ENCODE measurements at regions of chr1 and their contacts with region 1.

Region 1: DNA sequence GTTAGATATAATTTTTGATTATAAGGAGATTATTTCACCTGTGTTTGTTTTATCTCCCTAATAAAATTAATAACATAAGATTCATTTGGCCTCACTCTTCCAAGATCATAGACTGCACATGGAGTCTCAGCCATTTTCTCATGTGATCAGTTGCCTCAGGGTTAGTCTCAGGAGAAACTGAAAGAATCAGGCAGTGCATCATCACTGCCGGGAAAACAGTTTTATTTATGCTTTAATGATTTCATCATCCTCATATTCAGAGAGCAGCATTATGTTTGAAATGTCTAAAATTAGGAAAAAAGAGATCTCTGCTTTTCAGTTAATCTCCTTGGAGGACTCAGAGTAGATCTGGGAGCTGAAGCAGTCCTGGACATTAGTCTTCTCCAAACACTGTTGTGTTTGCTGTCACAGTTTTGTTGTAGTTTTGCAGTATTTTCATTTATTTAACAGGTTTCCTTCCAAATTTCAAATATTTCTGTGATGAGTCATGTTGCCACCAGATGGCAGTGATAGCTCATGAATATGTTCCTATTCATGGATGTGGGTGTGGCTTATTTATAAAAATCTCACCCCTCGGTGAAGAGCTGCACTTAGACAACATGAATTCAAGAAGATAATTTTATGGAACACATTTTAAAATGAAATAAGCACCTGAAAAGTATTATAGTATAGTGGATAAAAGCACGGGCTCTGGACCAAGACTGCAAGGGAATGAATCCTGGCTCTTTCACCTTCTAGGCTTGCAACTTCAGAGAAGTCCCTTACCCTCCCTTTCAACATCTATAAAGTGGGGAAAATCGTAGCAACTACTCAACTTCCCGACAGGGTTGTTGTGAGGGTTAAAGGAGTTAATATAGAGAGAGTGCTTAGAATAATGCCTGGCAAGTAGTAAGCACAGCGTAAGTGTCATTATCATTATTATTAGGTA is 31.2 kb downstream of the CHD1L start:
- DNase-seq: peak; percentile 87
- ATAC-seq: peak; percentile 90
- H3K4me3 ChIP-seq: no peak overlapping the region
- H3K27ac ChIP-seq: peak overlapping the region; percentile 51; the same call in 1 of the 2 replicates
- H3K4me1 ChIP-seq: peaks cover 6% of the 10 kb centered on the region
- H3K27me3 ChIP-seq: no peaks in the 10 kb centered on the region
- CTCF ChIP-seq: peak; percentile 59
- POLR2A ChIP-seq: no peak
- RAD21 ChIP-seq: peak; percentile 73

Region 2: DNA sequence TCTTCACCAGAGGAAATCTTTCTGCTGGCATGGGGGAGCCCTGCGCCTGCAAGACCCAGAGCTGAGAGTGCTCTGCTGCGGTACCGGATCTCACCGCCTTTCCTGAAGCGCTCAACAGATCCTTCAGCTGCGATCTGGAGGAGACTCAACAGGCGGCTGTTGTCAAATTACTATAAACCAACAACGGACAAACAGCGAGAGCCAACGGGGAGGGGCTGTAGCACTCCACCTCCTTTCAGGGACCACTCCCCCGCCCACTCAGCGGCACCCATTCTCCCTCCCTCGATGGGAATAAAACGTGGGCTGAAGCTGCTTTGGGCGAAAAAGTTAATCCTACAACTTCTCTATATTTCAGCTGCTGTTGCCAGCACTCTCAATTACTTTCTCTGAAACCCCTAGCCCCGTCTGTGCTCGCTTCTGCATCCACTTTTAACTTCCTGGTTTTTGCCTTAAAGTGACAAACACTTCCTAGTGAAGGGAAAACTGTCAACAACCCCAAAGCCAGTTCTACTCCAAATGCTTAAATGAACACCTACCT is 48.4 kb before region 1 on chr1 and contains the start of gene FMO5:
- CTCF ChIA-PET with region 1: no interaction called
- POLR2A ChIA-PET with region 1: no interaction called
- dilution Hi-C with region 1: no loop called
- in situ Hi-C with region 1: no loop called
- intact Hi-C with region 1: no loop called
- DNase-seq: peak; percentile 57
- ATAC-seq: peak; percentile 95
- H3K4me3 ChIP-seq: peak within 1 kb of the TSS; percentile 92
- H3K27ac ChIP-seq: peak within 1 kb of the TSS; percentile 75; the same call in 1 of the 2 replicates
- H3K4me1 ChIP-seq: peaks cover 2% of the 10 kb centered on the region; the same call in 1 of the 2 replicates
- H3K27me3 ChIP-seq: no peaks in the 10 kb centered on the region; the same call in 1 of the 2 replicates
- CTCF ChIP-seq: 0 out of 2 replicates have a peak, but pooled peaks have one; percentile 6
- POLR2A ChIP-seq: no peak
- RAD21 ChIP-seq: no peak; the same call in 1 of the 2 replicates
- total RNA-seq, gene FMO5: 0.36 and 0.83 TPM in 2 replicates

Region 3: GRCh38 chr1:147389532-147390524 is 116.2 kb after region 1 on chr1:
- CTCF ChIA-PET with region 1: interaction called, 15 read pairs
- POLR2A ChIA-PET with region 1: interaction called, 5 read pairs
- dilution Hi-C with region 1: no loop called
- in situ Hi-C with region 1: loop called (anchors 25 kb)
- intact Hi-C with region 1: loop called (anchors 2 kb)
- DNase-seq: peak; percentile 58
- ATAC-seq: peak; percentile 100
- H3K4me3 ChIP-seq: no peak overlapping the region
- H3K27ac ChIP-seq: no peak overlapping the region
- H3K4me1 ChIP-seq: no peaks in the 10 kb centered on the region
- H3K27me3 ChIP-seq: peaks cover 1% of the 10 kb centered on the region; the same call in 1 of the 2 replicates
- CTCF ChIP-seq: peak; percentile 74
- POLR2A ChIP-seq: no peak
- RAD21 ChIP-seq: peak; percentile 82

Region 4: DNA sequence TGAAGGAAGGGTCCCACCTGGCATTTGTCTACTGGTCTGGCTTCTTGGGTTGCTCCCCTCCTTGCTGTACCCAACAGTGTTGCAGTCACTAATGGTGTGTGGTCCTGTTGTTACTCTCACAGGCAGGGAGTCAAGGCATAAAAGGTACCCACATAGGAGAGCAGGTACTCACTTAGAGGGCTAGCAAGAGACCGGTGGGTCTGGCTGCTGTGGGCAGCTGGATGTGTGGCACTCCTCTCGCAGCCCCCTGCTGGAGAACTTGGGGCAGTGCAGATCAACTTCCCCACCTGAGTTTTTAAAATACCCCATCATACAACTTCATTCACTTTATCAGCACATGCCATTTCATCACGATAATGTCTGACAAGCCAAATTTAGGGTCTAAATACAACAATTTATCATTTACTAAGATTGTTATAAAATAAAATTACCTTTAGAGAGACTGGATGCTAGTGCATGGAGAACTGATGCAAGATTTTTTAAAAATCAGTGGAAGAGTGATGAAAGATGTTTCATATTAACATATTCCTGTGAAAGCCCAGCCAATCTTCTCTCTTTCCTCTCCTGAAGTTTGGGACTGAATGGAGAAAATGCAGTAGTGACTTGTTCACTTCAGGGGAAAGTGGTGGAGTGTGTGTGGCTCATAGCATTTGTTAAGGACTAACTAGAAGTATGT is 353.9 kb after region 1 on chr1:
- CTCF ChIA-PET with region 1: no interaction called
- POLR2A ChIA-PET with region 1: no interaction called
- dilution Hi-C with region 1: no loop called
- in situ Hi-C with region 1: loop called (anchors 10 kb)
- intact Hi-C with region 1: loop called (anchors 5 kb)
- DNase-seq: peak; percentile 44
- ATAC-seq: peak; percentile 93
- H3K4me3 ChIP-seq: no peak overlapping the region
- H3K27ac ChIP-seq: no peak overlapping the region
- H3K4me1 ChIP-seq: no peaks in the 10 kb centered on the region; the same call in 1 of the 2 replicates
- H3K27me3 ChIP-seq: no peaks in the 10 kb centered on the region
- CTCF ChIP-seq: peak; percentile 87
- POLR2A ChIP-seq: no peak
- RAD21 ChIP-seq: peak; percentile 76

Region 5: DNA sequence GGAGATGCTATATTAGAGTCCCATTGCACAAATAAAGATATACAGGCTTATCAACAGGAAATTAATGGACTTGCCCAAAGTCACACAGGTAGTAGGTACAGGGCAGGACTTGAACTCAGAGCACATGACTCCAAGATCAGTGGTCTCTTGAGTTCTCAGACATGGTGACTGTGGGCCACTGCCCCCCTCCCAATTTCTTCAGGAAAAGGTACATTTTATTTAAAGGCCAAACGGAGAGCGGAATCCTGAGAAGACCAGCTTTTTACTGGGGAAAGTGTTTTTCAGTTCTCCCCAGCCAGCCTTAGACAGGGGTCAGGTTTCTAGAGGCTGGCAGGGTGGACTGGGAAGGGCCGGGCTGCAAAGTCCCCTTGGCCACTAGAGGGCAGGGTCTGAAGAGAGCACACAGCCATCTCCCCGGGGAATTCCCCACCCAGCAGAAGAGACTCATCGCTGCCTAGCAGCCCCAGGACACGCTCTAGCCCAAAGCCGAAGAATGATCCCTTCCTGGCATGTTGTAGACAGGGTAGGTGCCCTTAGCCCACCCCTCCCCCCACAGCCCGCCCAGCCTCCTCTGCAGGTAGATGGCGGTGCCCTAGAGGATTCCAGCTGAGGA is 367.0 kb after region 1 on chr1:
- CTCF ChIA-PET with region 1: no interaction called
- POLR2A ChIA-PET with region 1: no interaction called
- dilution Hi-C with region 1: no loop called
- in situ Hi-C with region 1: loop called (anchors 10 kb)
- intact Hi-C with region 1: loop called (anchors 1 kb)
- DNase-seq: peak; percentile 84
- ATAC-seq: peak; percentile 99
- H3K4me3 ChIP-seq: no peak overlapping the region
- H3K27ac ChIP-seq: no peak overlapping the region
- H3K4me1 ChIP-seq: no peaks in the 10 kb centered on the region
- H3K27me3 ChIP-seq: no peaks in the 10 kb centered on the region
- CTCF ChIP-seq: peak; percentile 94
- POLR2A ChIP-seq: no peak
- RAD21 ChIP-seq: peak; percentile 66

Region 6: DNA sequence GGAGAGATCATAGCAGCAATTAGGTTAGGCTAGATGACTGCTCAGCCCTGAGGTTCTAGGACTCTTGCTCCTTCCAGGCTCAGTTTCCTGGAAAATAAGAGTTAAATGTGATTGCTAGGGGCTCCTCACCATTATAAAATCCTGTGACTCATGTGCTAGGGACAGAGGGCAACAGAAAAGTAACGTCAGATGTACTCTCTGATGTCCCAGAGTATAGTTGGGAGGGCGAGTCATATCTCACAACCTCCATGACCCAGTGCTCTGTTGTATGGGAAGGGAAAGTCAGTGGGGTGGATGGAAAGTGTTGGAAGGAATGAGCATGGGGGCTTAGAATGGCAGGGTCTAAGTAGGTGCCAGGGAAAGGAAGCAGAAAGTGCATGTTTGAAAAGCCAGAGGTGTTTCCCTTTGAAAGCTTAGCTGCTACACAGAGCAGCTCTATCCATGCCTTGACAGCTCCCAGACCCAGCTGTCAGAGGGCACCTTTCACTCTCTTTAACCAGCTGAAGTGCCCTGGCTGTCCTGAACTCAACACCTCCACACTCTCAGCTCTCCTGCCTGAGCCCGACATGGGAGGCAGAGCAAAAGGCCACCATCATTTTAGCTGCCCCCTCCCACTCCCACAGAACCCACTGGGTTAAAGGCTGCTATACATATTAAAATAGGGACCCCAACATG is 475.1 kb after region 1 on chr1:
- CTCF ChIA-PET with region 1: no interaction called
- POLR2A ChIA-PET with region 1: no interaction called
- dilution Hi-C with region 1: no loop called
- in situ Hi-C with region 1: no loop called
- intact Hi-C with region 1: no loop called
- DNase-seq: no peak
- ATAC-seq: no peak
- H3K4me3 ChIP-seq: no peak overlapping the region
- H3K27ac ChIP-seq: no peak overlapping the region
- H3K4me1 ChIP-seq: no peaks in the 10 kb centered on the region
- H3K27me3 ChIP-seq: no peaks in the 10 kb centered on the region; the same call in 1 of the 2 replicates
- CTCF ChIP-seq: no peak
- POLR2A ChIP-seq: no peak
- RAD21 ChIP-seq: no peak